H1 (cell line): ENCODE measurements at regions of chr11 and their contacts with region 1.

Region 1: GRCh38 chr11:36109850-36110606 is 166.2 kb downstream of the LDLRAD3 start:
- DNase-seq: peak in 1 of 2 experiments; percentile 62
- H3K4me3 ChIP-seq: peak overlapping the region in 2 of 4 experiments; percentile 3 to 38; a peak in 3 of 8 replicates
- H3K27ac ChIP-seq: peak overlapping the region; percentile 97
- H3K4me1 ChIP-seq: peaks cover 16 to 37% (median 30%) of the 10 kb centered on the region in 4 experiments
- H3K27me3 ChIP-seq: no peaks in the 10 kb centered on the region
- CTCF ChIP-seq: no peak
- EP300 ChIP-seq: peak in 1 of 2 experiments; percentile 88; a peak in 1 of 3 replicates
- POLR2A ChIP-seq: peak; percentile 18 to 91
- RAD21 ChIP-seq: no peak

Region 2: DNA sequence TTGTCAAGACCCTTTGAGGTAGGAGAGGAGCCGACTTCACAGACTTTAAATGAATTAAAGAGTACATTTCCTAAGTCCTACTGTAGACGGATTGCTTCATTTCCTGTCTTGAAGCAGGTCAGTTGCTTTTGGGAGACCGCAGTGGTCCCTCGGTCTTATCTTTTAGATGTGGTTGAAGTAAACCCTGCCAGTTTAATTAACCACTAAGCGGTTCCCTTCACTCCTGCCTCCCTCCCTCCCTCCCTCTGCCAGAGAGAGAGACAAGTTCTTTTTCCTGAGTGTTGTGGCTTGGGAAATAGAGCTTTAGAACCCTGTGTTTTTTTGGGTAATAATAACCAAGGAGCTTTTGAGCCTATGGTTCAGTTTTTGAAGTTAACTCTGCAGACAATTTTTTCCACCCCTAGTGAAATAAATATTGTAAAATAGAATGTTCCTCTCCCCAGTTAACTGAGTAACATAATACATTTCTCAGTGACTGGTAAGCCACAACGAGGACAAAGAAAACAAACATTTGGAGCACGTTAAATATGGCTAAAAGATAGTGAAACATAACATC is 18.7 kb before region 1 on chr11:
- CTCF ChIA-PET with region 1: interaction called, 9 read pairs
- POLR2A ChIA-PET with region 1: interaction called, 102 read pairs
- DNase-seq: no peak
- H3K4me3 ChIP-seq: no peak overlapping the region
- H3K27ac ChIP-seq: peak overlapping the region; percentile 52; the same call in 1 of the 2 replicates
- H3K4me1 ChIP-seq: peaks cover 6 to 33% (median 24%) of the 10 kb centered on the region in 4 experiments; a peak in 5 of 7 replicates
- H3K27me3 ChIP-seq: no peaks in the 10 kb centered on the region
- CTCF ChIP-seq: no peak
- EP300 ChIP-seq: no peak
- POLR2A ChIP-seq: no peak
- RAD21 ChIP-seq: no peak

Region 3: GRCh38 chr11:36123346-36124101 is 13.5 kb after region 1 on chr11:
- CTCF ChIA-PET with region 1: interaction called, 5 read pairs
- POLR2A ChIA-PET with region 1: interaction called, 52 read pairs
- DNase-seq: no peak
- H3K4me3 ChIP-seq: no peak overlapping the region
- H3K27ac ChIP-seq: no peak overlapping the region
- H3K4me1 ChIP-seq: peaks cover 3 to 12% (median 8%) of the 10 kb centered on the region in 4 experiments; a peak in 5 of 7 replicates
- H3K27me3 ChIP-seq: no peaks in the 10 kb centered on the region
- CTCF ChIP-seq: no peak
- EP300 ChIP-seq: no peak
- POLR2A ChIP-seq: no peak
- RAD21 ChIP-seq: no peak

Region 4: GRCh38 chr11:36289226-36289852 is 179.3 kb after region 1 on chr11 and contains the start of gene COMMD9:
- CTCF ChIA-PET with region 1: no interaction called
- POLR2A ChIA-PET with region 1: no interaction called
- DNase-seq: peak; percentile 88 to 93
- H3K4me3 ChIP-seq: peak within 1 kb of the TSS; percentile 80 to 92 (median 88)
- H3K27ac ChIP-seq: no peak within 1 kb of the TSS
- H3K4me1 ChIP-seq: peaks cover 0 to 3% (median 0%) of the 10 kb centered on the region in 4 experiments; a peak in 4 of 7 replicates
- H3K27me3 ChIP-seq: peaks cover 0 to 5% (median 0%) of the 10 kb centered on the region in 4 experiments; a peak in 1 of 7 replicates
- CTCF ChIP-seq: no peak
- EP300 ChIP-seq: peak in 1 of 2 experiments; percentile 64; a peak in 1 of 3 replicates
- POLR2A ChIP-seq: peak; percentile 50 to 88
- RAD21 ChIP-seq: no peak
- total RNA-seq, gene COMMD9: 43.3 and 49.1 TPM in 2 replicates